Activated naive CD4-positive, alpha-beta T cell treated with anti-CD3 and anti-CD28 coated beads for 36 hours (primary cell): ENCODE measurements at regions of chr11 and their contacts with region 1.

Region 1: DNA sequence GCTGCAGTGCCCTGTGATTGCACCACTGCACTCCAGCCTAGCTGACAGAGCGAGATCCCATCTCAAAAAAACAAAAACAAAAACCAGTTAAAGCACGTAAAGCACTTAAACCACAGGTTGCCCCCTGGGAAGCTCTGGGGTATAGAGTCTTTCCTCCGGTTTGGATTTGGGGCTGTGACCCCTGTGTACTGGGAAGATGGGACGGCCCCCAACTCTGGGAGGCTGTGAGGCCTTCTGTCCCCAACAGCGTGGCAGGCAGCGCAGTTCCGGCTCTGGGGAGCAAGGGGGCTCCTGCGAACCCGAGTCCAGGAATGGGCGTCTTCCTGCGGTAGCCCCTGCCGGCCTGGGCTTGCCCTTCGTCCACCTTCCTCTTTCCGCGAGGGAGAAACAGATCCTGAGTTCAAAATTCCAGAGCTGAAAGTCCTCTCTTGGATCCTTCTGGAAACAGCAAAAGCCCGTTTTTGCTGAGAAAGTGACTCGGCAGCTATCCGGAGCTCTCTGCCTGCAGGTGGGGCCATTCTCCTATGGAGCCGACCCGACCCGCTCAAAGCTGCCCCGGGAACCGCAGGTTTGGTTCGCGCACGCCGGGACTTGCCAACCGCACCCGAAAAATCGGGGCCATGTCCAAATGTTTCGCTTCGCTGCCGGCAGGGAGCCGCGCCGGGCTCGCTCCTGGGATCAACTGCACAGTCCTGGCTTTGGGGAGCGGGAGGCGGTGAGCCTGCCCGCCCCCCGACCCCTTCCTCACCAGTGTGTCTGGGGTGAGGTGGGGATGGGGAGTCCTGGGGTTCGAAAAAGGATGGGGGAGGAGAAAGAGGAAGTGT is 36.3 kb upstream of the POLA2 start:
- DNase-seq: peak; percentile 81
- H3K4me3 Mint-ChIP-seq: peak overlapping the region; percentile 74
- H3K27ac Mint-ChIP-seq: no peak overlapping the region
- H3K4me1 Mint-ChIP-seq: peaks cover 11% of the 10 kb centered on the region
- H3K27me3 Mint-ChIP-seq: peaks cover 18% of the 10 kb centered on the region

Region 2: DNA sequence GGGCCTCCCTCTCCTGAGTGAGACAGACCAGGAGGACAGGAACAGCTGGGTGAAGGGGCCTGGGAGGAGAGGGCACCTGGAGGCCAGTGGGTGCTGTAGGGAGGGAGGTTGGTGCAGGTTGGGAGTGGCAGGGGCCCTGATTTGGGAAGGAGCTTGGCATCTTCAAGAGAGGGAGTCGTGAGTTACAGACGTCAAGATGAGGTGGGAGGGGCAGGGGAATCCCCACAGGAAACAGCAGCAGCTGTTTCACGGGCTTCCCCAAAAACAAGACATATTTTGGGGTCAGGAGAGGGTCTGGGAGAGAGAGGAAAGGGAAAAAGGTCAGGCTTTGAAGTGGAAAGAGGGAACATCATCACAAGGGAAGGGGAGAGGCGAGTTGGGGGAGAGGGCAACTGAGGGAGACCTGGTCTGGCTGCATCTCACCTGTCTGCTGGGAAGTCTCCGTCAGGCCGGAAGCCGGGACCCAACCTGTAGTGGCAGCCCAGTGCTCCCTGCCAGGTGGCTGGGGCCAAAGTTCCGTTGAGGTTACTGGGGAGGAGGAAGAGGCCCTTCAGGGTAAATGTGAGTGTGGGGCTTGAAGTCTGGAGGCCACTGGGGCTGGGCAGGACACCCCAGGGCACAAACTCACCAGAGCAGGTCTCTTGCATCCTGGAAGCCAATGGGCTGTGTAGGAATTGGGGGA is 171.5 kb before region 1 on chr11:
- CTCF ChIA-PET with region 1: no interaction called
- intact Hi-C with region 1: no loop called
- DNase-seq: peak; percentile 55
- H3K4me3 Mint-ChIP-seq: peak overlapping the region; percentile 22
- H3K27ac Mint-ChIP-seq: peak overlapping the region; percentile 22
- H3K4me1 Mint-ChIP-seq: peaks cover 21% of the 10 kb centered on the region
- H3K27me3 Mint-ChIP-seq: no peaks in the 10 kb centered on the region

Region 3: GRCh38 chr11:65180877-65181568 is 44.5 kb before region 1 on chr11:
- CTCF ChIA-PET with region 1: no interaction called
- intact Hi-C with region 1: loop called (anchors 2 kb)
- DNase-seq: peak; percentile 59
- H3K4me3 Mint-ChIP-seq: peak overlapping the region; percentile 80
- H3K27ac Mint-ChIP-seq: no peak overlapping the region
- H3K4me1 Mint-ChIP-seq: peaks cover 15% of the 10 kb centered on the region
- H3K27me3 Mint-ChIP-seq: no peaks in the 10 kb centered on the region

Region 4: GRCh38 chr11:65261591-65262380 is 36.3 kb after region 1 on chr11 and contains the start of gene POLA2:
- CTCF ChIA-PET with region 1: interaction called, 10 read pairs
- intact Hi-C with region 1: no loop called
- DNase-seq: peak; percentile 98
- H3K4me3 Mint-ChIP-seq: peak within 1 kb of the TSS; percentile 93
- H3K27ac Mint-ChIP-seq: peak within 1 kb of the TSS; percentile 94
- H3K4me1 Mint-ChIP-seq: peaks cover 44% of the 10 kb centered on the region
- H3K27me3 Mint-ChIP-seq: no peaks in the 10 kb centered on the region
- total RNA-seq, gene POLA2: 65.1 to 67.0 TPM

Region 5: DNA sequence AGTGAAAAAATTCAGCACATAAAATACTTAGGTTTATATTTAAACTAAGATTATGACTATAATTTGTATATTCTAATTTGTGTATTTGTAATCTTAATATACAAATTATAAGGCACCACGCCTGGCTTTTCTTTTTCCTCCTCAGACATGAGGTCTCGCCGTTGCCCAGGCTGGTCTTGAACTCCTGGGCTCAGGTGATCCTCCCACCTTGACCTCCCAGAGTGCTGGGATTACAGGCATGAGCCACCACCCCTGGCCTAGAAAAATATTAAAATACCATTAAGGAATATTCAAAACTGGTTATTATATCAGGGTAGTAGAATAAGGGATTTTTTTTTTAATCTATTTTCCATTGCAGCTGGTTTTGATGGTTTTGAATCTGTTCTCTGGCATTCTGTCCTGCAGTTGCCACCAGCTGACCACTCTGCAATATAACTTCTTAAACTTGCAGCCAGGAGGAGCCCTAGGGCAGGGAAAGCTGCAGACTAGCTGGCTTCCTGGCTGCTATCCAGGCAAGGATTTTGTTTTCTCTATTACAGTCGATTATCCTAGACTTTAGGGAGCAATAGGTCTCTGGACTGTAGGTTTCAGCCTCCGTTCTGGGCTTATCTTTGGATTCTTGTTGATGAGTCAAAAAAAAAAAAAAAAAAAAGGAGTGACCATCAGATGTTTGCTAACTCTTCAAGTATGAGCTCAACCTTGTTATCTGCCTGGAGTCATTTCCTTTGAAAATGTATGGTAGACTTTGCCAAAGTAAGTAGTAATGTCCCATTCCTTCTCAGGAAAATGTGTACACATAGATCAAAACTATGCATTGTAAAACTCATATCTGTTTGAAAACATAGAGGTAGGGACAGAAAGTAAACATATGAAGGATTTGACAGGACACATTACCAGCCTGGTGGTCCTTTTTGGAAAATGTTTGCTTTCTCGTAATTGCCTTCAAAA is 49.5 kb after region 1 on chr11:
- CTCF ChIA-PET with region 1: interaction called, 6 read pairs
- intact Hi-C with region 1: loop called (anchors 10 kb)
- DNase-seq: peak; percentile 53
- H3K4me3 Mint-ChIP-seq: no peak overlapping the region
- H3K27ac Mint-ChIP-seq: no peak overlapping the region
- H3K4me1 Mint-ChIP-seq: peaks cover 15% of the 10 kb centered on the region
- H3K27me3 Mint-ChIP-seq: no peaks in the 10 kb centered on the region

Region 6: GRCh38 chr11:65314501-65315203 is 89.2 kb after region 1 on chr11 and contains the start of gene CDC42EP2:
- CTCF ChIA-PET with region 1: interaction called, 81 read pairs
- intact Hi-C with region 1: loop called (anchors 1 kb)
- DNase-seq: peak; percentile 72
- H3K4me3 Mint-ChIP-seq: peak within 1 kb of the TSS; percentile 74
- H3K27ac Mint-ChIP-seq: no peak within 1 kb of the TSS
- H3K4me1 Mint-ChIP-seq: peaks cover 5% of the 10 kb centered on the region
- H3K27me3 Mint-ChIP-seq: peaks cover 8% of the 10 kb centered on the region
- total RNA-seq, gene CDC42EP2: 0.57 to 1.5 TPM

Region 7: GRCh38 chr11:65354265-65355012 is 128.9 kb after region 1 on chr11 and contains the start of gene TIGD3:
- CTCF ChIA-PET with region 1: interaction called, 5 read pairs
- intact Hi-C with region 1: loop called (anchors 1 kb)
- DNase-seq: peak; percentile 97
- H3K4me3 Mint-ChIP-seq: peak within 1 kb of the TSS; percentile 84
- H3K27ac Mint-ChIP-seq: peak within 1 kb of the TSS; percentile 67
- H3K4me1 Mint-ChIP-seq: peaks cover 11% of the 10 kb centered on the region
- H3K27me3 Mint-ChIP-seq: no peaks in the 10 kb centered on the region
- total RNA-seq, gene TIGD3: 0.32 to 0.62 TPM

Region 8: DNA sequence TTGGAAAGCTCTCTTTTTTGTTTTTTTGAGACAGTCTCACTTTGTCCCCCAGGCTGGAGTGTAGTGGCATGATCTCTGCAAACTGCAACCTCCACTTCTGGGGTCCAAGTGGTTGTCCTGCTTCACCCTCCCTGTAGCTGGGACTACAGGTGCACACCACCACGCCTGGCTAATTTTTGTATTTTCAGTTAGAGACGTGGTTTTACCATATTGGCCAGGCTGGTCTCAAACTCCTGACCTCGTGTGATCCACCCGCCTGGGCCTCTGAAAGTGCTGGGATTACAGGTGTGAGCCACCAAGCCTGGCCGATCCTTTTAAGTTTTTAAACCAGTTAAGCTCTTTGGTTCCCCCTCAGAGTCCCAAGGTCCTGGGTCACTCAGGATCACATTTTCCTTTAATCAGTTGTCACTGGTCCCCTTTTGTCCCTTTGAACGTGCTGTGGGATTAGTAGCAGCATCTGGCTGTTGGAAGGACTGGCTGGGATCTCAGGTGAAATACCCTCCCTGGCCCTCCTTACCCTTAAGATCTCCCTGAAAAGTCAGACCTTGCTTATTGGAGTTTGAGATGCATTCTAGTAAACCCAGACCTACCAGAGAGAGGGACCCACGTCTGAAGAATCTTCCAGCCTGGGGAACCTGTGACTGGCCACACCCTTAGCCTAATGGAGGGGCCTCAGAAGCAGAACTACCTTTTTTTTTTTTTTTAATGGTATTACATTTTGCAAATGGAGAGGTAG is 281.4 kb after region 1 on chr11:
- CTCF ChIA-PET with region 1: no interaction called
- intact Hi-C with region 1: loop called (anchors 2 kb)
- DNase-seq: peak; percentile 80
- H3K4me3 Mint-ChIP-seq: no peak overlapping the region
- H3K27ac Mint-ChIP-seq: no peak overlapping the region
- H3K4me1 Mint-ChIP-seq: peaks cover 40% of the 10 kb centered on the region
- H3K27me3 Mint-ChIP-seq: no peaks in the 10 kb centered on the region